Right cardiac atrium (tissue), 5 donors: ENCODE measurements at regions of chr3 and their contacts with region 1.

Region 1: DNA sequence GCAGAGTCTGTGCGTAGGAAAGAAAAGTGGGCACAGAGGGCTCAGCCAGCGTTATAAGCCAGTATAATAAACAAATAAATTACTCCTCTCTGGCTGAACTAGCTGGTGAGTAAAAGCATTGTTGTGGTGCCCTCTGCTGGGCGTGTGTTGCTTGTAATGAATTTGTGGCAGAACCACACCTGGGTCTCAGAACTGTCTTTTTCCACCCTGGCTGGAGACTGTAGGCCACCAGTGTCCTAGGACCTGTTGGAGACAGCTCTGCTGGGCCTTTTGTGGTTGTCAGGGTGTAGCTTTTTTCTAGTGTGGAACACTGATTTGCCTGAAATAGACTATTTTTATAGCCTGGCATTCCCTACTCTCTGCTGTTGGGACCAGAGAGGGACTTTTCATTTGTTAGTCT is 130.5 kb upstream of the EIF1B start:
- DNase-seq: peak; percentile 74 to 92 (median 84)
- ATAC-seq: peak; percentile 62 to 63
- H3K4me3 ChIP-seq: no peak overlapping the region
- H3K27ac ChIP-seq: no peak overlapping the region
- H3K4me1 ChIP-seq: no peaks in the 10 kb centered on the region
- H3K27me3 ChIP-seq: no peaks in the 10 kb centered on the region

Region 2: GRCh38 chr3:39541917-39542329 is 637.1 kb before region 1 on chr3:
- intact Hi-C with region 1: loop called in 3 of 4 experiments (anchors 10 kb)
- DNase-seq: no peak
- ATAC-seq: peak in 1 of 2 donors; percentile 70
- H3K4me3 ChIP-seq: peak overlapping the region; percentile 50
- H3K27ac ChIP-seq: no peak overlapping the region
- H3K4me1 ChIP-seq: peaks cover 3% of the 10 kb centered on the region
- H3K27me3 ChIP-seq: no peaks in the 10 kb centered on the region

Region 3: DNA sequence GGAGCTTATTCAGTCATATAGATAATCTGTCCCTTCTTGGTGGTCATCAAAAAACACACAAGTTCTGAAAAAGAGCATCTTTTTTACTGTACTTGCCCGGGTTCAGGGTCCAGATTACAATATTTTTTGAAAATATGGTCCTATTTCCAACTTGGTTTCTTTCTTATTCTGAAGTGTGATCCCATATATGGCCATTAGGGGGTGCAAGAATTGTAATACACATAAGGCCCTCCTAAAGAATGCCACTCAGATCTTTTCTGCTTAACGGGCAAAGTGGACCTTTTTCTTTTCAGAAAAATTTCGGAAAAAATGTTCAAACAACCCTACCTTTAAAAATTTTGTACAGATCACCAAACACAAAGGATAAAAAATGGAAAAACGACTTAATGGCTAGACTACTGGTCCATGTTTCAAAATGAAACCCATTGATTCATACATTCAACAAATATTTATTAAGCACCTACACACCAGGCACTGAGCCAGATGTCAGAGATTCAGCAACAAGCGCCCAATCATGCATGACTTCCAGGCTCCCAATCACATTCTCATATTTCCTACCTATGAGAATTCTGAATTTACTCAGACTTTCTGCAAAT is 471.6 kb before region 1 on chr3:
- intact Hi-C with region 1: loop called in 3 of 4 experiments (anchors 5 kb)
- DNase-seq: no peak
- ATAC-seq: no peak
- H3K4me3 ChIP-seq: no peak overlapping the region
- H3K27ac ChIP-seq: no peak overlapping the region
- H3K4me1 ChIP-seq: no peaks in the 10 kb centered on the region
- H3K27me3 ChIP-seq: no peaks in the 10 kb centered on the region

Region 4: DNA sequence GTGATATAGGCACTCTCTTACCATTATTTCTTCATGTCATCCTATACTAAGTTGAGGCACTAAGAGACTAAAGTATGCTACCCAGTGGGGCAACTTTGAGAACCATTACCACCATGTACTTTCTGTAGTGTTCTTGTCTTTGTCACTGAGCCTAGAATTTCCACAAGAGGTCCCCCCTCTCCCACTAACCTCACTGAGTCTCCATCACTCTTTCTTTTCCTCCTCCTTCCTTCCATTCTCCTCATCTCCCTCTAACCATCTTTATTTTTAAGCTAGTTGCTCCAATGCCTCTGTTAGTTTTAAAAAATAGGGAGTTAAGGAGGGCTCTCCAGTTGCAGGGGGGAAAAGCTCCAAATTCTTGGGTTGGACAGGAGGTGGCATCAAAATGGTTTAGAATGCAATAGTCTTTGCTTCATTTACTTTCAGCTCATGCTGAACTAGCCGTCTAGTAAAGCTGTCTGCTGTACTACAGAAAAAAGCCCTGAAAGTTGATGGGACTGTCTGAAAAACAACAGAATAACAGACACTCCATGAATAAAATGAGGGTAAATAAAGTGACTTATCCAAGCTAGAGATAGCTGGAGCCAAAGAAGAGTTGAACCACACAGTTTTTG is 454.7 kb before region 1 on chr3:
- intact Hi-C with region 1: loop called (anchors 5 to 10 kb)
- DNase-seq: no peak
- ATAC-seq: peak; percentile 48 to 51
- H3K4me3 ChIP-seq: no peak overlapping the region
- H3K27ac ChIP-seq: no peak overlapping the region
- H3K4me1 ChIP-seq: no peaks in the 10 kb centered on the region
- H3K27me3 ChIP-seq: no peaks in the 10 kb centered on the region

Region 5: GRCh38 chr3:39812537-39812936 is 366.5 kb before region 1 on chr3:
- intact Hi-C with region 1: loop called in 2 of 4 experiments (anchors 5 to 10 kb)
- DNase-seq: peak in 2 of 3 donors; percentile 14 to 58
- ATAC-seq: no peak
- H3K4me3 ChIP-seq: no peak overlapping the region
- H3K27ac ChIP-seq: no peak overlapping the region
- H3K4me1 ChIP-seq: no peaks in the 10 kb centered on the region
- H3K27me3 ChIP-seq: no peaks in the 10 kb centered on the region

Region 6: DNA sequence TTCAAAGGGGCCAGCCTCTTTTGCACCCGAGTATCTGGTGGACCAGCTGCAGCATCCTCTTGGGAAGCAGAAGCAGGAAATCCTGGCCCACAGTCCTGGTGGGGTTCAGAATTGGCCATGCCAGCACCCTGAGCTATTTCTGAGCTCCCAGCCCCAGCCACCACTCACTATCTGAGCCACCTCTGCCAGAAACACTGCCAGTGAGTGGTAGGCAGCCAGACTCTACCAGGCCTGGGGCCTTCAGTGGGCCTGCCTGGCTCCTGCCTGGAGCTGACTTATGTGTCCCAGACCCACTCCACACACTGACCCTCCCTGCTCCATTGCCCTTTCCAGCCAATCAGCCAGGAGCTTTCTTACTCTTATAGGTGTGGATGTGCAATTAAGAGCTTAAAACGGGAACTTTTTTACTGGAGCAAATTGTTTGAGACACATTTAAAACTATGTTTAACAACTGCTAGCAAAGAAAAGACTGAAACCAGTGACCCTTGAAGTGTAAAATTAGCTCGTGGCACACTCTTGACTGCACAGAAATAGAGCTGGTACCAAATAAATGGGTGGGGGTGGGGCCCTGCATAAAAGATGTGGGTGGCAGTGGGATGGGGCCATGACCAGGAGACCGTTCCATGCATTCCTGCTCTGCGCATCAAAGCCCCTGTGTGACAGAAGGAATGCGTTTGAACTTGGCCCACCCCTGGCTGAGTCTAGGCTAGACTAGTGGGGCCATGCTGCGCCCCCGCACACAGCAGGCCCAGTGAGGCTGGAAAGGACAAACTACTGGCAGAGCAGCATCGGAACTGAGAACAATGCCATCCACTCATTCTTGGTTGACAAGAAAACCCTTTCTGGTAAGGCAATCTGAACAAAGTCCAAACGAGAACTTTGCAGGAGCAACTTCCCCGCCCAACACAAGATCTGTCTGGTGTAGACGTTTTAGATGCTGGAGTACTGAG is 1068.3 kb after region 1 on chr3:
- intact Hi-C with region 1: no loop called
- DNase-seq: peak in 2 of 3 donors; percentile 57 to 58
- ATAC-seq: peak; percentile 19 to 22
- H3K4me3 ChIP-seq: no peak overlapping the region
- H3K27ac ChIP-seq: no peak overlapping the region
- H3K4me1 ChIP-seq: peaks cover 15% of the 10 kb centered on the region
- H3K27me3 ChIP-seq: no peaks in the 10 kb centered on the region